Activated CD8-positive, alpha-beta T cell treated with anti-CD3 and anti-CD28 coated beads for 36 hours (primary cell): ENCODE measurements at regions of chr16 and their contacts with region 1.

Region 1: GRCh38 chr16:9123871-9124270 is 32.4 kb downstream of the HAPSTR1 start:
- DNase-seq: peak; percentile 41
- ATAC-seq: no peak
- H3K4me3 Mint-ChIP-seq: no peak overlapping the region
- H3K27ac Mint-ChIP-seq: peak overlapping the region; percentile 66
- H3K4me1 Mint-ChIP-seq: peaks cover 79% of the 10 kb centered on the region
- H3K27me3 Mint-ChIP-seq: no peaks in the 10 kb centered on the region
- CTCF ChIP-seq: no peak

Region 2: GRCh38 chr16:9099131-9099625 is 24.7 kb before region 1 on chr16:
- CTCF ChIA-PET with region 1: interaction called, 4 read pairs
- POLR2A ChIA-PET with region 1: interaction called, 26 read pairs
- intact Hi-C with region 1: loop called (anchors 5 kb)
- DNase-seq: peak; percentile 55
- ATAC-seq: peak; percentile 47
- H3K4me3 Mint-ChIP-seq: peak overlapping the region; percentile 58
- H3K27ac Mint-ChIP-seq: peak overlapping the region; percentile 89
- H3K4me1 Mint-ChIP-seq: peaks cover 88% of the 10 kb centered on the region
- H3K27me3 Mint-ChIP-seq: no peaks in the 10 kb centered on the region
- CTCF ChIP-seq: no peak

Region 3: GRCh38 chr16:9107025-9107970 is 16.6 kb before region 1 on chr16:
- CTCF ChIA-PET with region 1: interaction called, 4 read pairs
- POLR2A ChIA-PET with region 1: interaction called, 59 read pairs
- intact Hi-C with region 1: no loop called
- DNase-seq: no peak
- ATAC-seq: no peak
- H3K4me3 Mint-ChIP-seq: no peak overlapping the region
- H3K27ac Mint-ChIP-seq: peak overlapping the region; percentile 74
- H3K4me1 Mint-ChIP-seq: peaks cover 90% of the 10 kb centered on the region
- H3K27me3 Mint-ChIP-seq: no peaks in the 10 kb centered on the region
- CTCF ChIP-seq: no peak